Activated T-helper 2 cell treated with anti-CD3 and anti-CD28 coated beads, Interferon-gamma antibody, Interleukin-2, Interleukin-4, amounts not matched to agents 10 μg/mL and 5 μg/mL and 100 μg/mL, durations not matched to agents 14 hours and 24 hours and 36 hours (primary cell): ENCODE measurements at regions of chr7 and their contacts with region 1.

Region 1: DNA sequence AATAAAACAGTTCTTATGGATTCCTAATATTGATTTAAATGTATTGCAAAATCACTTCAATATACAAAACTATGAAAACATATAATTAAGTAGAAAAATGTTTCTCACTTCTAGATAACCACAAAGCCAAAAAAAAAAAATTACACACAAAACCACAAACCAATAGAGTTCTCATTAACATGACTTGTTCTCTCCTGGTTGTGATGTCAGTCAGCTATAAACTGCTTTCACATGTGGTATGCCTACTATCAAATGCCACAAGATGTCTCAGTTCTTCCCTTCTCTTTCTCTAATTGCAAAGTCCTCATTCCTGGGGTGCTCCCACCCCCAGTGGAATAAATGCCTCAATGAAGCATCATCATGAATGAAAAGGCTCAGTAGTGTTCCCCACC is 16.6 kb downstream of the GNAI1 start:
- DNase-seq: no peak
- H3K4me3 Mint-ChIP-seq: peak overlapping the region; percentile 37
- H3K27ac Mint-ChIP-seq: peak overlapping the region; percentile 62
- H3K4me1 Mint-ChIP-seq: peaks cover 23% of the 10 kb centered on the region
- H3K27me3 Mint-ChIP-seq: peaks cover 11% of the 10 kb centered on the region

Region 2: DNA sequence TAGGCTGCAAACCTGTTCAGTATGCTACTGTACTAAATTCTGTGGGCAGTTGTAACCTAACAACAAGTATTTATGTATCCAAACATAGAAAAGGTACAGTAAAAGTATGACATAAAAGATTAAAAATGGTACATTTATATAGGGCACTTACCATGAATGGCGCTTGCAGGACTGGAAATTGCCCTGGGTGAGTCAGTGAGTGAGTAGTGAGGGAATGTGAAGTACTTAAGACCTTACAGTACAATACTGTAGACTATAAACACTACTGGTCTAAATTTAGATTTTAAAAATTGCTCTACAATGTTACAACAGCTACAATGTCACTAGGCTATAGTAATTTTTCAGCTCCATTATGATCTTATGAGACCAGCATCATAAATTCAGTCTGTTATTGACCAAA is 162.6 kb before region 1 on chr7:
- intact Hi-C with region 1: no loop called
- DNase-seq: no peak
- H3K4me3 Mint-ChIP-seq: no peak overlapping the region
- H3K27ac Mint-ChIP-seq: no peak overlapping the region
- H3K4me1 Mint-ChIP-seq: no peaks in the 10 kb centered on the region
- H3K27me3 Mint-ChIP-seq: no peaks in the 10 kb centered on the region

Region 3: DNA sequence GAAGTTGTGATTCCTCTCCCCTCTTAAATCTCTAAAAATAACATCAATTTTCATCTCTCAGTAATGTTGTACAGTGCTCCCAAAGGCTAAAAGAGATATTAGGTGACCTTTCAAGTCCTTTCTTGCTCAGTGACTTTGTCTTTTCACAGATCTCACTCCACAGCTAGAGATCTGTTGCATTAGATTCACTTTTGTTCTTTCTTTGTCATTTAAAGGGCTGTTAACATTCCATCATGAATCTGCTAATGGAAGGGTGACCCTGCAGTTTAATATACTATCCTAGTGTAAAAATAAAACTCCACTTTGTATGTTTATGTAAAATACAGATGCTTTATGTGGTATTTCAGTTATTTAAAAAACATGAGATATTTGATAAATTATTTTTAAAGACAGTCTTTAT is 13.9 kb after region 1 on chr7:
- intact Hi-C with region 1: no loop called
- DNase-seq: no peak
- H3K4me3 Mint-ChIP-seq: no peak overlapping the region
- H3K27ac Mint-ChIP-seq: no peak overlapping the region
- H3K4me1 Mint-ChIP-seq: peaks cover 13% of the 10 kb centered on the region
- H3K27me3 Mint-ChIP-seq: no peaks in the 10 kb centered on the region

Region 4: GRCh38 chr7:80175744-80176143 is 24.5 kb after region 1 on chr7:
- intact Hi-C with region 1: loop called (anchors 1 kb)
- DNase-seq: no peak
- H3K4me3 Mint-ChIP-seq: no peak overlapping the region
- H3K27ac Mint-ChIP-seq: no peak overlapping the region
- H3K4me1 Mint-ChIP-seq: peaks cover 18% of the 10 kb centered on the region
- H3K27me3 Mint-ChIP-seq: no peaks in the 10 kb centered on the region

Region 5: GRCh38 chr7:80216996-80217842 is 65.9 kb after region 1 on chr7:
- intact Hi-C with region 1: loop called (anchors 1 kb)
- DNase-seq: no peak
- H3K4me3 Mint-ChIP-seq: no peak overlapping the region
- H3K27ac Mint-ChIP-seq: no peak overlapping the region
- H3K4me1 Mint-ChIP-seq: peaks cover 10% of the 10 kb centered on the region
- H3K27me3 Mint-ChIP-seq: no peaks in the 10 kb centered on the region

Region 6: DNA sequence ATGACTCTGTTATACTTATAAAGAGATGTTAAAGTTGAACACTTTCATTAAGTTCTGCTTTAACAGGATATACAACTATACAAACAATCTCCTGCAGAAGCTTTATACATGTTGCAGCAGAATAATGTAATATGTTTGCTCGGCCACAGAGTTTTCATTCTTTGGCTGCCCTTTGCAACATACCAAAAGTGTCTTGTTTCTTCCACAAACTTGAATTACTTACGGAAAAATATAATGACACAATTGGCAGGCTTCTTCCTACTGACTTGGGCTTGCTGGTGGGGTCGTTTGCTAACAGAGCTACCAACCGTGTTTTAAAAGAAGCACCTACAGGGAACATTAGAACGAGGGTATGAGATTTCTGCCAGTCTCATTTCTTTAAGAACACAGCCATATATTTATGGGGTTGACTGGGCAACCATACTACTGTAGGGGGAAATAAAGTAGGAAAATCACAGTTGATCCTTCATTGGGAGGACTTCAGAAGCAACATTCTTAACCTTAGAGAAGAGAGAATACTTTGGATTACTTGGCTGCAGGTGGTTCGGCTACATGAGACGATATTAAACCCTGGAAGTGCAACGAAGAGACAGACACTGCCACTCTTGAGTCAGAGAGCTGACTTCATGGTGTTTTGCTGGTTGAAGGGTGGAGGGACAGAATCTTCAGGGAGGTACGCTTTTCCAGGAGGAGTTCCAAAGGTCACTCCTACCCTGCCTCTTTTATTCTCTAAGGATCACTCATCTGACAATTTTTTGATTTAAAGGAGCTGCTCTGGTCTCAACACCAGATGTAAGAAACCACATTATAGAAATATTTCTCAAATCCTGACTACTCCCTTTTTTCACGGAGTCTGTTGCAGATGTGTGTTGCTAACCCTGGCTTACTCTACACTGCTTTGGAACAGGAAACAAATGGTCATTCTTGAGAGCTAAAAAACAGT is 643.6 kb after region 1 on chr7:
- intact Hi-C with region 1: no loop called
- DNase-seq: no peak
- H3K4me3 Mint-ChIP-seq: no peak overlapping the region
- H3K27ac Mint-ChIP-seq: no peak overlapping the region
- H3K4me1 Mint-ChIP-seq: no peaks in the 10 kb centered on the region
- H3K27me3 Mint-ChIP-seq: no peaks in the 10 kb centered on the region